Posterior vena cava (tissue), 2 donors: ENCODE measurements at regions of chr13 and their contacts with region 1.

Region 1: GRCh38 chr13:46553886-46554858 is 1.2 kb downstream of the LRCH1 start:
- DNase-seq: peak; percentile 93

Region 2: DNA sequence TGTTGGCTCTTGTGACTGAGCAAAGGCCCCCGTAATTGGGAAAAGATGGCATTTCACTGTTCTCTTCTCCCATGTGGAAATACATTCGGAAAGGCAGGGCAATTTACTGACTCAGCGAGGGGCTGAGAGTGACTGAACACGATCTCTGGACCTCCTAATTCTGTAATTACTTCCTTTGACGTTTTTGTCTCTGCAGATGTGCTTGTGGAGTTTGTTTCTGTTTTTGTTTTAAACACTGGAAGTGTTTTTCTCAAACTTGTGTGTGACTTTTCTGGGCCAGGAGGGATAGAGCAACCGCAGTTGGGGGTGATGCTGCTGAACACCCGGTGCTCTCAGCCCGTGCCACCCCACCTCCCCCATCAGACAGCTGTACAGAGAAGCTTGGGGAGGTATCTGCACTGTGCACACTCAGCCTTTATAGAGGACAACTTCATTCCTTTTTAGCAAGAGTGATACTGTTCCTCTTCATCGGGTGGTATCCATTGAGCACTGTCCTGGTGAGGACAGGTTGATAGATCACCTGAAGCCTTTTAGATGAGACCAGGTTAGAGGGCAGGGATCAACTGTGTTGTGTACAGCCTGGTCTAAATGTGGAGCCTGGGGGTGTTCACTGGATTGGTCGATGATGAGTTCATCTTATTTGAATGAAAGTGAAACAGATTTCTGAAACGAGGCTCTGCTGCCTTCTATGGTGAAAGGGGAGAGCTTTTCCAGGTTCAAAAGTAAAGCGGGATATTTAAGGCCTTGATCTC is 125.4 kb after region 1 on chr13:
- intact Hi-C with region 1: loop called in 1 of 2 experiments (anchors 10 kb)
- DNase-seq: no peak

Region 3: GRCh38 chr13:46712524-46712923 is 158.4 kb after region 1 on chr13:
- intact Hi-C with region 1: loop called in 1 of 2 experiments (anchors 10 kb)
- DNase-seq: no peak

Region 4: DNA sequence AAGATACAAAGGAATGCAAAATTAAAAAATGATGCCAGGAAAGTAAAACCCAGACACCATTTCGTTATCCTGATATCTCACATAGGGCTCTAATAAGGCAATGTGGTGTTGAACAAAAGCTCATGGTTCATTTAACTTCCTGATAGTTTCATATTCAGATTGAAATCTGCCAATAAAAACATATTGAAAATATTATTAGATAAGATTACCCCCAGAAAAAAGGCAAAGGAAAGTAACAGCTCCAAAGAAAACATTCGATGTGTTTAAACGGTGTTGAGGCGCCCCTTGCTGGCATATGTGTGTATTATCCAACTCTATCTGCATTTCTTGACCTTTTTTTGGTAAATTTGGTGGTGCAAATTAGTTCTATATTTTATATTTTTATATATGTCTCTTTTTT is 166.9 kb after region 1 on chr13:
- intact Hi-C with region 1: loop called (anchors 5 to 10 kb)
- DNase-seq: no peak